Natural killer cell (primary cell): ENCODE measurements at regions of chrX and their contacts with region 1.

Region 1: DNA sequence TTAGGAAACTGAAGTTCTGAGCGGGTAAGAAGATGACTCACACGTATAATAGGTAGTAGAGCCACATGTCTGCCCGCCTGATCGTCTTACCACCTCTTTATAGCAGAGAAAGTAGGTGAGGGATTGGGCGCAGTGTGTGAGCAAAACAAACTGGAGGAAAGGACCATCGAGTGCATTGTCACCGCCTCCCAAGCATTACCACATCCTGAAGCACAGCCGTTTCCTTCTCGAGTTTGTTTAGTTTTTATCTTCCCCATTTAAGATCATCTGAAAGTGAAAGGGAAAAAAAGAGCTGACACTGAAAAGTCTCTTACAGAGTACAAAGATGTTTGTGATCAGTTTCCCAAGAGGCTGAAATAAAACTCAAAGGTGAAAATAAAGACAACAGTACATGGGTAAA is 14.8 kb downstream of the PDK3 start:
- DNase-seq: peak; percentile 56 to 92
- ATAC-seq: peak; percentile 88 to 97 (median 93)
- H3K4me3 ChIP-seq: peak overlapping the region; percentile 37
- H3K4me3 Mint-ChIP-seq: peak overlapping the region; percentile 84
- H3K27ac ChIP-seq: peak overlapping the region; percentile 98
- H3K27ac Mint-ChIP-seq: peak overlapping the region; percentile 95 to 96
- H3K4me1 ChIP-seq: peaks cover 34% of the 10 kb centered on the region
- H3K4me1 Mint-ChIP-seq: peaks cover 53 to 57% of the 10 kb centered on the region in 2 donors
- H3K27me3 ChIP-seq: no peaks in the 10 kb centered on the region
- H3K27me3 Mint-ChIP-seq: no peaks in the 10 kb centered on the region
- CTCF ChIP-seq: no peak

Region 2: GRCh38 chrX:24464836-24465531 is 14.9 kb before region 1 on chrX and contains the start of gene PDK3:
- intact Hi-C with region 1: loop called (anchors 1 kb)
- DNase-seq: peak; percentile 82 to 93
- ATAC-seq: peak; percentile 92 to 98 (median 94)
- H3K4me3 ChIP-seq: peak within 1 kb of the TSS; percentile 84
- H3K4me3 Mint-ChIP-seq: peak within 1 kb of the TSS; percentile 88
- H3K27ac ChIP-seq: peak within 1 kb of the TSS; percentile 96
- H3K27ac Mint-ChIP-seq: peak within 1 kb of the TSS; percentile 72 to 90
- H3K4me1 ChIP-seq: peaks cover 16% of the 10 kb centered on the region
- H3K4me1 Mint-ChIP-seq: peaks cover 27 to 32% of the 10 kb centered on the region in 2 donors
- H3K27me3 ChIP-seq: no peaks in the 10 kb centered on the region
- H3K27me3 Mint-ChIP-seq: no peaks in the 10 kb centered on the region
- CTCF ChIP-seq: no peak
- total RNA-seq, gene PDK3: 21.9 to 30.9 (median 28.1) TPM